IMR-90 (cell line): ENCODE measurements at regions of chr18 and their contacts with region 1.

Region 1: DNA sequence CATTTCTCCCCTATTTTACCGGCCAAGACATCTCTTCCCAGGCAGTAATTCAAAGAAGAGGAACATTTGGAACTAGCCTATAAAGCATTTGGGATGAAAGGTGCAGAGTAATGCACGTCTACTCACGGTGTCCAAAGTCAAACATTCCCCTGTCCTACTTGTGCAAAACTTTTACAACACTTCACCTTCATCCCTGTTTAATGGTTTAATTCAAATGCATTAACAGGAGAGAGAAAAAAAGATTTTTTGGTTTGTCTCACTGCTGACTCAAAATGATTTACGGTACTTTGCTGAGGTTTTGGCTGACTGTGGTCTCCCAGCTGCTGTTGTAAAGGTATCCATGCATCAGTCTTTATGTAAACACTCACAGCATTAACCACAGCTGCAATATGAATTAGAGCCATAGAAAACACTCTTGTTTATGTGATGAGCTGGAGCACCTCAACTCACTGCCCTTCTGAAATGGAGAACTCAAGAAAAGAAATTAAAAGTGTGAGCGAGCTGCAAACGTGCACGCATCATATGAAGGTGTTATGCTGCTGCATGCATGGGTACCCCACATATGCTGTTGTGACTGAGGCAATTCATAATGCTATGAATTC is 220.5 kb downstream of the PIEZO2 start:
- DNase-seq: peak; percentile 97
- ATAC-seq: peak; percentile 33; the same call in 1 of the 2 replicates
- H3K4me3 ChIP-seq: no peak overlapping the region
- H3K27ac ChIP-seq: peak overlapping the region; percentile 95; the same call in 1 of the 2 replicates
- H3K4me1 ChIP-seq: peaks cover 21% of the 10 kb centered on the region
- H3K27me3 ChIP-seq: no peaks in the 10 kb centered on the region
- CTCF ChIP-seq: no peak
- POLR2A ChIP-seq: no peak
- RAD21 ChIP-seq: no peak

Region 2: GRCh38 chr18:10860928-10861327 is 67.9 kb before region 1 on chr18:
- CTCF ChIA-PET with region 1: no interaction called
- POLR2A ChIA-PET with region 1: no interaction called
- dilution Hi-C with region 1: no loop called
- in situ Hi-C with region 1: no loop called
- intact Hi-C with region 1: loop called (anchors 5 kb)
- DNase-seq: peak; percentile 83
- ATAC-seq: peak; percentile 91
- H3K4me3 ChIP-seq: no peak overlapping the region
- H3K27ac ChIP-seq: no peak overlapping the region; the same call in 1 of the 2 replicates
- H3K4me1 ChIP-seq: peaks cover 13% of the 10 kb centered on the region
- H3K27me3 ChIP-seq: no peaks in the 10 kb centered on the region
- CTCF ChIP-seq: no peak
- POLR2A ChIP-seq: no peak
- RAD21 ChIP-seq: no peak